ENCODE measurements at regions of chr5 and their contacts with region 1.

Region 1: GRCh38 chr5:671459-672328 is 21.5 kb downstream of the TPPP start:
- DNase-seq: peak; percentile 79
- H3K4me3 Mint-ChIP-seq: no peak overlapping the region
- H3K27ac Mint-ChIP-seq: no peak overlapping the region
- H3K4me1 Mint-ChIP-seq: peaks cover 14% of the 10 kb centered on the region
- H3K27me3 Mint-ChIP-seq: peaks cover 4% of the 10 kb centered on the region

Region 2: DNA sequence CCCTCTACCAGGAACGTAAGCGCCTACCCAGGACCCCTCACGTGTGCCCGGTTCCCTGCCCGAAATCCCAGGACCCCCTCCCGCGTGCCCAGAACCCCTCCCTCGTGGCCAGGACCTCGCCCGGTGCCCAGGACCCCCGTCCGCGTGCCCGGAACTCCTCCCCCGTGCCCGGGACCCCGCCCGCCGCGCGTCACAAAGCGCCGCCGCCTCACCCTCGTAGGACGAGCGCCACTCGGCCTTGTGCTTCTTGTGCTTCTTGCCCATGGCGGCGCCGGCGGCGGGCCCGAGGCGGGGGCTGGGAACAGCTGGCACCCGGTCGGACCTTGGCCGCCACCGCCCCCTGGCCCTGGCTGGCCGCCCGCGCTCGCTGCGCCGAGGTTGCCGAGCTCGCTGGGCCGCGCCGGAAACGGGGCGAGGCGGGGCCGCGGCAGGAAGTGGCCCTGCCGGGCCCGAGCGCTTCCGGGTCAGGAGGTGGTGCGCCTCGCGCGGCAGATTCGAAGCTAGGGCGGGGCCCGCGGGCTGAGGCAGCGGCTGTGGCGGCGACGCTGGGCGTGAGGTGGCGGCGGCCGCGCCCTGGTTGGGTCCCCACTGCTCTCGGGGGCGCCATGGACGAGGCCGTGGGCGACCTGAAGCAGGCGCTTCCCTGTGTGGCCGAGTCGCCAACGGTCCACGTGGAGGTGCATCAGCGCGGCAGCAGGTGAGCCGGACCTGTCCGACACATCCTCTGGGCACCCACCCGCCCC is 220.9 kb after region 1 on chr5 and contains the starts of genes BRD9 and TRIP13:
- CTCF ChIA-PET with region 1: interaction called, 9 read pairs
- POLR2A ChIA-PET with region 1: no interaction called
- intact Hi-C with region 1: loop called (anchors 5 kb)
- DNase-seq: peak; percentile 89
- H3K4me3 Mint-ChIP-seq: peak within 1 kb of the TSS; percentile 85
- H3K27ac Mint-ChIP-seq: peak within 1 kb of the TSS; percentile 84
- H3K4me1 Mint-ChIP-seq: peaks cover 25% of the 10 kb centered on the region
- H3K27me3 Mint-ChIP-seq: no peaks in the 10 kb centered on the region
- total RNA-seq, gene BRD9: 43.1 to 50.7 TPM
- total RNA-seq, gene TRIP13: 32.4 to 33.9 TPM

Region 3: DNA sequence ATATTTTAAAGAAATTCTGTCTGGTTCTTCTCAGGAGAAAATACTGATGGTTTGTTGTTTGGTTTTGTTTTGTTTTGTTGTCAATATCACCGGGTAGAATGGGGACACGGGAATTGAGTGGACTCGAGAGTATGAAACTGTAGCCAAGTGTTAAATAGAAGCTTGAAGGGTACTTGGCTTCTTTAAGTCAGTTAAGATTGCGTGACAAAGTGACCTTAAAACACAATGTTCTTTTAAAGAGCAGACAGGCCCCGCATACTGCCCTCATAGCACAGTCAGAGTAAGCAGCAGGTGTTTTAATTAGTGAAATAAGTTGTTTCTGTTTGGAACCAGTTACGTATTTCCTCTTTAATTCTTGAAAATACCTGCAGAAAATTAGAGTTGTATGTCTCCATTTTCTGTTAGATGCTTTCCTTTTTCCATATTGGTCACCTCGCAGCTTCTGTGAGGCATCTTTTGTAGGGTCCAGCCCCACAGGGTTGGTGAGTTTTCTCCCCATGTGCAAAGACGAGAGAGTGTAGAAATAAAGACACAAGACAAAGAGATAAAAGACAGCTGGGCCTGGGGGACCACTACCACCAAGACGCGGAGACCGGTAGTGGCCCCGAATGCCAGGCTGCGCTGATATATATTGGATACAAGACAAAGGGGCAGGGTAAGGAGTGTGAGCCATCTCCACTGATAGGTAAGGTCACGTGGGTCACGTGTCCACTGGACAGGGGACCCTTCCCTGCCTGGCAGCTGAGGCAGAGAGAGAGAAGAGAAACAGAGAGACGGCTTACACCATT is 230.6 kb after region 1 on chr5:
- CTCF ChIA-PET with region 1: interaction called, 52 read pairs
- POLR2A ChIA-PET with region 1: no interaction called
- intact Hi-C with region 1: no loop called
- DNase-seq: no peak
- H3K4me3 Mint-ChIP-seq: no peak overlapping the region
- H3K27ac Mint-ChIP-seq: no peak overlapping the region
- H3K4me1 Mint-ChIP-seq: no peaks in the 10 kb centered on the region
- H3K27me3 Mint-ChIP-seq: no peaks in the 10 kb centered on the region

Measured in activated CD4-positive, alpha-beta memory T cell treated with anti-CD3 and anti-CD28 coated beads for 36 hours (primary cell).